HEK293 (cell line): ENCODE measurements at regions of chr17 and their contacts with region 1.

Region 1: GRCh38 chr17:57597531-57598453 is 147.3 kb downstream of the CCDC182 start:
- H3K4me3 ChIP-seq: no peak overlapping the region
- H3K27ac ChIP-seq: no peak overlapping the region
- H3K4me1 ChIP-seq: 0 out of 2 replicates have a peak, but pooled peaks cover 5% of the 10 kb centered on the region
- CTCF ChIP-seq: peak; percentile 75

Region 2: DNA sequence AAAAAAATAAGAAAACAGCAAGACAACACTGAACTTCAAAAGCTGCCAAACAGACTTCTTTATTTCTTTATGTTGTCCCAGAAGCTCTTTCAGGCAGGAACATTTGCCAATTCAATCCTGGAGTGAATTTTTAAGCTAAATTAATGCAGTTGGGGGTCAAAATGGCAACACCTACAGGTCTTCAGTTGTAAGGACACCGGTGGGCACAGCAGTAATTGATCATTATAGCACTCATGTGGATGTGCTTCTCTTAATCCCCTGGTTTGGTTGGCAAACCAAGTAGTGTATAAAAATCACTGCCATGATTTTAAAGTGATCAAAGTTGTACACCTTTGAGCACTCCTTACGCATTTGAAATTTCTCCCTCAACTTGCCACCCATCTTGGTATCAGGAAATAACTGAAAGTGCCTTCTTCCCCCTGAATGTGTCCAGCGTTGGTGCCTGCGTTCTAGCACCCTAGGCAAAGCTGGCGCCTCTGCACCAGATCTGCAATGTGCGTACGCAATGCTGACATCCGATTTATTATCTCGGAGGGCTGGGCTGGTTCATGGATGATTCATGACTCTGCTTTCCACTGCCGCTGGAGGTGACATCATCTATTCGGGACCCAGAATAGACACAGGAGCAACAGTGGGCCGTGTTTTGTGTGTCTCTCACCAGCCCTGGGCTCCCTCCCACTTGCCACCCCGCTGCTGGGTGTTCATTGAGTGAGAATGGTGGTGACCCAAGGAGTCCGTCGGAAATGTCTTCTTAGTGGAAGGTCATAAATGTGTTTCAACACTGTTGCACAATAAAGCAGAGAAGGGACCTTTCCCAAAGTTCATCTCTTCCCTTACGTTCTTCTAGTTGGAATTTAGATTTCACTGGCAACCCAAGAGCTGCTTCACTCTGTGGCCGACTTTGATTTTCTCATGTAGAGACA is 56.1 kb before region 1 on chr17:
- CTCF ChIA-PET with region 1: interaction called, 12 read pairs
- POLR2A ChIA-PET with region 1: no interaction called
- H3K4me3 ChIP-seq: no peak overlapping the region
- H3K27ac ChIP-seq: peak overlapping the region; percentile 42
- H3K4me1 ChIP-seq: peaks cover 83% of the 10 kb centered on the region
- CTCF ChIP-seq: no peak

Region 3: DNA sequence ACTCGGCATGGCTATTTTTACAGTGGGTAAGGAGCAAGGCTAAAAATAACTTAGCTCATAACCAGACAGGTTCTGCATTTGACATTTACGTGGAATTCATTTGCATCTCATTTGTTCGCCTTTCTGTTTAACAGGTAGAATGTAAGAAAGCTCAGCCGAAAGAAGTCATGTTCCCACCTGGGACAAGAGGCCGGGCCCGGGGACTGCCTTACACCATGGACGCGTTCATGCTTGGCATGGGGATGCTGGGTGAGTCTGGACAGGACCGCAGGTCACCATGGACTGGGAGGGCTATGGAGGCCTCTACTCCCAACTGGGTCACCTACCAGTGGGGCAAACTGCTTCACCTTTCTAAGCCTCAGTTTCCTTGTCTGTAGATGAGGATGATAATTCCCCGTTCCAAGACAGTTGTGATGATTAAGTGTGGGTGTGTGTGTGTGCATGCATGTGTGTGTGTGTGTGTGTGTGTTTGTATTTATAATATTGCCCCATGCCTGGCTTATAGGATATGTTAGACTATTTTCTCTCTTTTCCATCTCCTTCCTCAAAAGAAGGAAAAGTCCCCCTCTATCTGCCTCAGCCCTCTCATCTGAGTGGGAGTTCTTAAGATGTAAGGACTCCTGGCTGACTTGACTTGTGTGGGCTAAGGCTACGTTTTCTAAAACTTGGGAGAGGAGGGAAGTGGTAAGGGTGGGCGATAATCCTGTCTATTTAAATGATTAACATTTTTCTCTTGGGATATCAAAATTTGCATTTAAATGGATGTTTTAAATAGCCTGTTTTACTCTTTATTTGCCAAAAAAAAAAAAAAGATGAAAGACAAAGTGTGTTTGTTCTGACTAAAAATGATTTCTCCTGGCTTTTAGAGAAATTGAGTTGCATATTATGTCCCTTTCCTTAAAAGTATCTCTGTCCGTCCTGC is 18.3 kb after region 1 on chr17:
- CTCF ChIA-PET with region 1: interaction called, 12 read pairs
- POLR2A ChIA-PET with region 1: no interaction called
- H3K4me3 ChIP-seq: no peak overlapping the region
- H3K27ac ChIP-seq: no peak overlapping the region
- H3K4me1 ChIP-seq: peaks cover 6% of the 10 kb centered on the region; the same call in 1 of the 2 replicates
- CTCF ChIP-seq: no peak

Region 4: GRCh38 chr17:57662644-57663308 is 65.0 kb after region 1 on chr17:
- CTCF ChIA-PET with region 1: interaction called, 30 read pairs
- POLR2A ChIA-PET with region 1: interaction called, 3 read pairs
- H3K4me3 ChIP-seq: peak overlapping the region; percentile 33
- H3K27ac ChIP-seq: peak overlapping the region; percentile 39
- H3K4me1 ChIP-seq: peaks cover 13% of the 10 kb centered on the region
- CTCF ChIP-seq: no peak

Region 5: GRCh38 chr17:57739402-57740392 is 141.9 kb after region 1 on chr17:
- CTCF ChIA-PET with region 1: interaction called, 11 read pairs
- POLR2A ChIA-PET with region 1: no interaction called
- H3K4me3 ChIP-seq: no peak overlapping the region
- H3K27ac ChIP-seq: no peak overlapping the region
- H3K4me1 ChIP-seq: no peaks in the 10 kb centered on the region
- CTCF ChIP-seq: 0 out of 2 replicates have a peak, but pooled peaks have one; percentile 31